ENCODE measurements at regions of chr3 and their contacts with region 1.

Region 1: DNA sequence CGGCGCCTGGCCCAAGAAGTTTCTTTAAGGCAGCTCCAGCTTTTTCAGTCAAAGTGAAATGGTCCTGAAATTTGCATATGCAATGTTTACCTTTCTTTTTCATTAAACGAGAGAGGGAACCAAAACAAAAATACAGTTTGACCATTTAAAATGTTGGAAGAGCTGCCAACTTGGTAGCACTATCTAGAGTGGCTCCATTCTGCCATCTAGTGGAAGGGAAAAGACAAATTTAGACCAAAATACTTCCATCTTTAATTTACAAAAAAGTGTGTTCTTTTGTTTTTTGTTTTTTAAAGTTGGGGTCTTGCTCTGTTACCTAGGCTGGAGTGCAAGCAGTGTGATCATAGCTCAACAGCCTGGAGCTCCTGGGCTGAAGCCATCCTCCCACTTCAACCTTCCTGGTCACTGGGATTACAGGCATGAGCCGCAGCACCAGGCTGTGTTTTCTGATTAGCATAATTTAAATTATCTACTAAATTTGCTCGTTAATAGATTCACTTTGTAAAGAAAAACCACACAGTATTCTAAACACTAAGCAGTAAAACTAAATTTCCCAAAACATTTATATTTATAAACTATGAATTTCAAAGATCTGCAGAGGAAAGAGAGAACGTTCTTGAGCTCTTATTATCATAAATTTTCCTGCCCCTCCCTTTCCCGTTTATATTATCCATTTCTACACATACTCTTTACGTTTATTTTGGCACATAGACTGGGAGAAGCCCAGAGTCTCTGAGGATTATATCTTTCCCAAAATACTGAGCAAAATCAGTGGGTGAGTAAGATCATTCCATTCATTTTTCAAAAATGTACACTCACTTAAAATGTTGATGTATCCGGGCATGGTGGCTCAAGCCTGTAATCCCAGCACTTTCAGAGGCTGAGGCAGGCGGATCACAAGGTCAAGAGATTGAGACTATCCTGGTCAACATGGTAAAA is 15.4 kb upstream of the RFC4 start:
- DNase-seq: peak in 5 of 9 donors; percentile 37 to 49 (median 45)
- ATAC-seq: peak; percentile 46
- H3K4me3 ChIP-seq: no peak overlapping the region
- H3K4me3 Mint-ChIP-seq: no peak overlapping the region
- H3K27ac ChIP-seq: no peak overlapping the region
- H3K27ac Mint-ChIP-seq: no peak overlapping the region
- H3K4me1 ChIP-seq: peaks cover 6 to 11% of the 10 kb centered on the region in 2 donors
- H3K4me1 Mint-ChIP-seq: peaks cover 9 to 20% (median 12%) of the 10 kb centered on the region in 7 donors
- H3K27me3 ChIP-seq: peaks cover 0 to 14% of the 10 kb centered on the region in 2 donors
- H3K27me3 Mint-ChIP-seq: peaks cover 13 to 23% (median 18%) of the 10 kb centered on the region in 5 donors

Region 2: GRCh38 chr3:186697510-186697909 is 124.2 kb before region 1 on chr3:
- CTCF ChIA-PET with region 1: no interaction called
- POLR2A ChIA-PET with region 1: no interaction called
- intact Hi-C with region 1: loop called in 1 of 2 experiments (anchors 1 kb)
- DNase-seq: no peak
- ATAC-seq: no peak
- H3K4me3 ChIP-seq: no peak overlapping the region
- H3K4me3 Mint-ChIP-seq: no peak overlapping the region
- H3K27ac ChIP-seq: no peak overlapping the region
- H3K27ac Mint-ChIP-seq: no peak overlapping the region
- H3K4me1 ChIP-seq: no peaks in the 10 kb centered on the region
- H3K4me1 Mint-ChIP-seq: peaks cover 0 to 2% (median 0%) of the 10 kb centered on the region in 7 donors
- H3K27me3 ChIP-seq: no peaks in the 10 kb centered on the region
- H3K27me3 Mint-ChIP-seq: peaks cover 0 to 23% (median 8%) of the 10 kb centered on the region in 5 donors

Region 3: DNA sequence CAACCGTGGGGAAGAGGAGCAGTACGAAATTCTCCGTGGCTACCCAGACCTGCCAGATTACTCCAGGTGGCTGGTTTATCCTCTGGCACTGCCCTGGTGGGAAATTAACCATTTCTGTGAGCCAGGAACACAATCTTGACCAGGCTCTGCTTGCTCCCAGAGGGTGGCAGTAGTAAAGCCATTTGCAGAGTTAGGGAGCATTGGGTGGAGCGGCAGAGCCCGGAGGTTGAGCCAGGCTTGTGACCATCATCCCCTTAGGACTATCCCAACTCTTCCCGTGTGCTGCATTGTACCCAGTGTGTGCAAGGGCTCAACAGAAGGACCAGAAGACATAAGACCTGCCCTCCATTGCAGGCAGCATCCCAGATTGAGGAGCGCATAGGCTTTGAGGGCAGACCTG is 99.2 kb before region 1 on chr3:
- CTCF ChIA-PET with region 1: no interaction called
- POLR2A ChIA-PET with region 1: no interaction called
- intact Hi-C with region 1: loop called in 1 of 2 experiments (anchors 2 kb)
- DNase-seq: no peak
- ATAC-seq: no peak
- H3K4me3 ChIP-seq: no peak overlapping the region
- H3K4me3 Mint-ChIP-seq: no peak overlapping the region
- H3K27ac ChIP-seq: no peak overlapping the region
- H3K27ac Mint-ChIP-seq: no peak overlapping the region
- H3K4me1 ChIP-seq: no peaks in the 10 kb centered on the region
- H3K4me1 Mint-ChIP-seq: peaks cover 0 to 2% (median 0%) of the 10 kb centered on the region in 7 donors
- H3K27me3 ChIP-seq: no peaks in the 10 kb centered on the region
- H3K27me3 Mint-ChIP-seq: peaks cover 0 to 8% (median 4%) of the 10 kb centered on the region in 5 donors

Measured in naive thymus-derived CD4-positive, alpha-beta T cell (primary cell).